CD4-positive, alpha-beta T cell (primary cell): ENCODE measurements at regions of chr14 and their contacts with region 1.

Region 1: DNA sequence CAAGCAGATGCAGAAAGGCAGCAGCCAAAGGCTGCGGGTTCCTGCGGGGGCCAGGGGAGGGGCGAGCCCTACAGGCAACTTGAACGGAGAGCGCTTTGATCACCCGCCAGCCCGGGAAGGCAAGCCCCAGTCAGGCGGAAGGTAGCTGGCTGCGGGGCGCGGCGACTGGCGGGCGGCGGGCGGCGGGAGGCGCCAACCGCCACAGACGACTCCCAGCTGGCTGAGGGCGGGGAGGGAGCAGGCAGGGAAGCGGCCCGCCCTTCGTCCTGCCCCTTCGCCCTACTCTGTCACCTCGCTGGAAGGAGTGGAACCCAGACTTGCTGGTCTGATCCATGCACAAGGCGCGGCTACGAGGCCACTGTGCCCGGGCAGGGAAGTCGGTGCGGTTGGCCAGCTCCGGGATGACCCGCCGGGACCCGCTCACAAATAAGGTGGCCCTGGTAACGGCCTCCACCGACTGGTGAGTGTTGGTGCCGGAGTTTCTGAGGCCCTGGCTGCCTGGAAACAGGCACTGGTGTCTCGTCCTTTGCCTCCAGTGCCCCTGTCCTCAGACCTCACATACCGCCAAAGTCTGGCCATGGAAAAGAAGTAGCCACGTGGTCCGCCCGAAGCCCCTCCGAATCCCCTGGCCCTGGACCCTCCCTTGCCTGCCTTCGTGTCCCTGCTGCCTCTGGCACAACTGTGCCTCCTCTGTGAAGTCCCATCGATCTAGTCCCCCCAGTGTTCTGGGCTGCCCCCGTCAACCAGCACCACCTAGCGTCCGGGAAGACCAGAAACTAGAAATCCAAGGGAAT is 15.4 kb upstream of the CARMIL3 start:
- DNase-seq: peak; percentile 37 to 81 (median 62)
- ATAC-seq: peak; percentile 88
- H3K4me3 ChIP-seq: peak overlapping the region; percentile 68
- H3K4me3 Mint-ChIP-seq: peak overlapping the region; percentile 90
- H3K27ac ChIP-seq: peak overlapping the region; percentile 16 to 23
- H3K27ac Mint-ChIP-seq: peak overlapping the region; percentile 54
- H3K4me1 ChIP-seq: peaks cover 7% of the 10 kb centered on the region
- H3K4me1 Mint-ChIP-seq: peaks cover 12% of the 10 kb centered on the region
- H3K27me3 ChIP-seq: no peaks in the 10 kb centered on the region
- H3K27me3 Mint-ChIP-seq: no peaks in the 10 kb centered on the region
- CTCF ChIP-seq: peak; percentile 74

Region 2: DNA sequence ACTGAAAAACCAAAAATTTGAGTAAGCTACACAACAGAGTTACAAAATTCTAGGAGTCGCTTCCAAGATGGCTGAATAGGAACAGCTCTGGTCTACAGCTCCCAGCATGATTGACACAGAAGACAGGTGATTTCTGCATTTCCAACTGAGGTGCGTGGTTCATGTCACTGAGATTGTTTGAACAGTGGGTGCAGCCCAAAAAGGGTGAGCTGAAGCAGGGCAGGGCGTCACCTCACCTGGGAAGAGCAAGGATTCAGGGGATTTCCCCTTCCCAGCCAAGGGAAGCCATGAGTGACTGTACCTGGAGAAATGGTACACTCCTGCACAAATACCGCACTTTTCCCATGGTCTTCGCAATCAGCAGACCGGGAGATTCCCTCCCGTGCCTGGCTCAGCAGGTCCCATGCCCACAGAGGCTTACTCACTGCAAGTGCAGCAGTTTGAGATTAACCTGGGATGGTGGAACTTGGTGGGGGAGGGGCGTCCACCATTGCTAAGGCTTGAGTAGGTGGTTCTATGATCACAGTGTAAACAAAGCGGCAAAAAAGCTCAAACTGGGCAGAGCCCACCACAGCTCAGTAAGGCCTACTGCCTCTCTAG is 93.9 kb before region 1 on chr14:
- CTCF ChIA-PET with region 1: no interaction called
- POLR2A ChIA-PET with region 1: no interaction called
- intact Hi-C with region 1: no loop called
- DNase-seq: no peak
- ATAC-seq: no peak
- H3K4me3 ChIP-seq: no peak overlapping the region
- H3K4me3 Mint-ChIP-seq: no peak overlapping the region
- H3K27ac ChIP-seq: no peak overlapping the region
- H3K27ac Mint-ChIP-seq: no peak overlapping the region
- H3K4me1 ChIP-seq: no peaks in the 10 kb centered on the region
- H3K4me1 Mint-ChIP-seq: peaks cover 24% of the 10 kb centered on the region
- H3K27me3 ChIP-seq: no peaks in the 10 kb centered on the region
- H3K27me3 Mint-ChIP-seq: no peaks in the 10 kb centered on the region
- CTCF ChIP-seq: no peak

Region 3: DNA sequence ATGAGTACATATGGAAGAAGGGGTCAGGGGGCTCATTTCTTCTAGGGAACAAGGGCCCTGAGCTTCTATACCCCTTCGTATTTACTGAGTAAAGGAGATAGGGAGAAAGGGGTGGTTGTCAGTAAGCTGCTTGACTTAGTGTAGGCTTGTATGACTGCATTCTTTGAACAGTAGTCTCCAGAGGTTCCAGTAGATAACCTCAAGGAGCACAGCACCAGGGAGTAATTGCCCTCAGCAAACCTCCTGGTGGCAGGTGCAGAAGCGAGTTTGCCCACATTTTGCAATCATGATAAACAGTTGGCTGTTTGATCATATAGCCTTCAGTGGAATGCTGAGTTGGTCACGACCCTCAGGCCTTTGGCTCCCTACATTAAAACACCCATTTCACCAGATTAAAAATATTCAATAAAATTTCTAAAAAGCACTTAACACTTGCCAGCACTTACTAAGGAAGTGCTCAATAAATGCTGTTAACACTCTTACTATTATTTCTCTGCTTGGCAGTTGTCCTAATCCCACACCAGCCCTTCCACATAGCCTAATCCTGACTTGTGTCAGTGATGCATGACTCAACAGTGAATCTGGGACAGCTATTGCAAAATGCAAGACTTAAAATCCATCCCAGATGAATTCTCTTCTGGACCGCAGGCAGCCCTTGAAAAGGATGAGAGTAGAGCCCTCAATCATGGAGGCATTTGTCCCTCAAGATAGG is 51.3 kb before region 1 on chr14:
- CTCF ChIA-PET with region 1: no interaction called
- POLR2A ChIA-PET with region 1: no interaction called
- intact Hi-C with region 1: loop called in 1 of 2 experiments (anchors 5 kb)
- DNase-seq: no peak
- ATAC-seq: no peak
- H3K4me3 ChIP-seq: no peak overlapping the region
- H3K4me3 Mint-ChIP-seq: no peak overlapping the region
- H3K27ac ChIP-seq: no peak overlapping the region
- H3K27ac Mint-ChIP-seq: no peak overlapping the region
- H3K4me1 ChIP-seq: peaks cover 15% of the 10 kb centered on the region
- H3K4me1 Mint-ChIP-seq: peaks cover 18% of the 10 kb centered on the region
- H3K27me3 ChIP-seq: no peaks in the 10 kb centered on the region
- H3K27me3 Mint-ChIP-seq: no peaks in the 10 kb centered on the region
- CTCF ChIP-seq: no peak

Region 4: DNA sequence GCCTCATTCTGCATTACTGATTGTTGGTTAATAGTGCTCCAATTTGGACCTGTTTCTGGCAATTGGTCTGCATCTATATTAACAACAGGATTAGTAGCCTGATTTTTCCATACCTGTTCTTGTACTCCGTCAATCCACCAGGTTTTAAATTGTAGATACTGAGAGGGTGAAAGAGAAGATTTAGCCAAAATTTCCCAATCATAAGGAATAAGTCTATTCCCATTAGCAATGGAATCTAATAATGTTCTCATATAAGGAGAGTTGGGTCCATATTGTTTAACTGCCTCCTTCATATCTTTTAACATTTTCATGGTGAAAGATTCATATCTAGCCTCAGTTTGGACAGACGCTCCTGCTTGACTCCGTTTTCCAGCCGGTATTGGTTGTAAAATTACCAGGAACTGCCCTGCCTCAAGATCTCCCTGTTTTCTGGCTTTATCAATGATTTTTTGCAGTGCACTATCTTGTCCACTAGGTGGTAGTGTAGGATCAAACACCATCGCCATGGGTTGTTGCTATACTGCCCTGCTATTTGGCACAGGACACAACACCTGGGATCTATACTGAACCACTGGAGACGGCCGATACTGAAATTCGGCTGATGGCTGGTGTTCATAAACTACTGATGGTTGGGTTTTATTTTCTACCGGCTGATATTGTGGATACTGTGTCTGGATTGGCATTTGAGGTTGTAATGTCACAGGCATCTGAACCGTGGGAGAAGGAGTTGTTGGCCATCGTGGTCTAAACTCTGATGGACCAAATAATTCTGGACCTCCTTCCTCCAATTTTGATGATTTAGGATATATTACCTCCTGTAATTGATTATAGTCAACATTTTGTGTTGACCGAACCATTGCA is 22.5 kb before region 1 on chr14:
- CTCF ChIA-PET with region 1: no interaction called
- POLR2A ChIA-PET with region 1: no interaction called
- intact Hi-C with region 1: loop called (anchors 1 kb)
- DNase-seq: peak in 12 of 14 experiments; percentile 9 to 85 (median 32)
- ATAC-seq: peak; percentile 98
- H3K4me3 ChIP-seq: no peak overlapping the region
- H3K4me3 Mint-ChIP-seq: no peak overlapping the region
- H3K27ac ChIP-seq: no peak overlapping the region
- H3K27ac Mint-ChIP-seq: no peak overlapping the region
- H3K4me1 ChIP-seq: peaks cover 11% of the 10 kb centered on the region
- H3K4me1 Mint-ChIP-seq: peaks cover 25% of the 10 kb centered on the region
- H3K27me3 ChIP-seq: no peaks in the 10 kb centered on the region
- H3K27me3 Mint-ChIP-seq: no peaks in the 10 kb centered on the region
- CTCF ChIP-seq: peak; percentile 92

Region 5: GRCh38 chr14:24838945-24839616 is 802.7 kb after region 1 on chr14:
- CTCF ChIA-PET with region 1: no interaction called
- POLR2A ChIA-PET with region 1: no interaction called
- intact Hi-C with region 1: no loop called
- DNase-seq: no peak
- ATAC-seq: no peak
- H3K4me3 ChIP-seq: no peak overlapping the region
- H3K4me3 Mint-ChIP-seq: no peak overlapping the region
- H3K27ac ChIP-seq: no peak overlapping the region
- H3K27ac Mint-ChIP-seq: no peak overlapping the region
- H3K4me1 ChIP-seq: no peaks in the 10 kb centered on the region
- H3K4me1 Mint-ChIP-seq: no peaks in the 10 kb centered on the region
- H3K27me3 ChIP-seq: no peaks in the 10 kb centered on the region
- H3K27me3 Mint-ChIP-seq: peaks cover 15% of the 10 kb centered on the region
- CTCF ChIP-seq: no peak